ENCODE measurements at regions of chr16 and their contacts with region 1.

Region 1: DNA sequence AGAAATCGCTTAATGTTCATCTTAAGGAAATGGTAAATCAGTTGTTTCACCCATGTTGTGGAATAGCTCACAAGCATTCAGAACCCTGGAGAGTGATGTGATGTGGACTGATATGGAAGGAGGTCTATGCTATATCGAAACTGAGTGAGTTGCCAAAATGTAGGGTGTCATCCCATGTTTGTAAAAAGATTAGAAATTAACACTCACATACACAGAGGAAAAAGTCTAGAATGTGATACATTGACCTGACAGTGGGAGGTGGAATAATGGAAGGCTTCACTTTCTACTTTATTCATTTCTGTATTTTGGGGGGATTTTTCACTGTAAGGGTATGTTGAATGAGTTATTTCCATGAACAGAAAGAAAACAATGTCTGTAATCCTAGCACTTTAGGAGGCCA is 4.7 kb upstream of the PRM1 start:
- DNase-seq: no peak
- H3K4me3 Mint-ChIP-seq: no peak overlapping the region
- H3K27ac Mint-ChIP-seq: peak overlapping the region; percentile 67
- H3K4me1 Mint-ChIP-seq: peaks cover 25% of the 10 kb centered on the region
- H3K27me3 Mint-ChIP-seq: no peaks in the 10 kb centered on the region

Region 2: GRCh38 chr16:11297492-11298142 is 11.8 kb after region 1 on chr16:
- CTCF ChIA-PET with region 1: interaction called, 5 read pairs
- intact Hi-C with region 1: loop called (anchors 1 kb)
- DNase-seq: peak; percentile 78
- H3K4me3 Mint-ChIP-seq: peak overlapping the region; percentile 49
- H3K27ac Mint-ChIP-seq: peak overlapping the region; percentile 0
- H3K4me1 Mint-ChIP-seq: peaks cover 27% of the 10 kb centered on the region
- H3K27me3 Mint-ChIP-seq: no peaks in the 10 kb centered on the region

Measured in activated naive CD4-positive, alpha-beta T cell treated with anti-CD3 and anti-CD28 coated beads for 36 hours (primary cell).